ENCODE measurements at regions of chr17 and their contacts with region 1.

Region 1: DNA sequence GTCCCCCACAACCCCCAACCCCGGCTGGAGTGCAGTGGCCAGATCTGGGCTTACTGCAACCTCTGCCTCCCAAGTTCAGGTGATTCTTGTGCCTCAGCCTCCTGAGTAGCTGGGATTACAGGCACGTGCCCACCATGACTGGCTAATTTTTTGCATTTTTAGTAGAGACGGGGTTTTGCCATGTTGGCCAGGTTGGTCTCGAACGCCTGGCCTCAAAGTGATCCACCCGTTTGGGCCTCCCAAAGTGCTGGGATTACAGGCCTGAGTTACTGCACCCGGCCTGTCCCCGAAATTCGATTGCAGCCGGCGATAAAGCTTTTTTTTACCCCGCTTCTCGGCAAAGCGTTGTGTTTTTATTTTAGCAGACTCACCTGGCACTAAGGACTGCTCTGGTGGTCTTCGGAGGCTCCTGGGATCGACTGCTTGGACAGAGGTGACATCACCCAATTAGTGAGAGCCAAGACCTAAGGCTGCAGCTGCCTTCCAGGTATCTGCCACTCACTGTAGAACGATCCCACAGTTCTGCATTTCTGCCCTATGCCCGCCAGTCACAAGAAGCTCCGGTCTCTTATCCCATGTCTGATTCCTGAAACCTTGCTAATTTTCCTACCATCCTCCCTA is 82.2 kb upstream of the ARL4D start:
- DNase-seq: peak; percentile 38
- ATAC-seq: no peak
- H3K4me3 Mint-ChIP-seq: no peak overlapping the region
- H3K27ac Mint-ChIP-seq: no peak overlapping the region
- H3K4me1 Mint-ChIP-seq: peaks cover 11% of the 10 kb centered on the region
- H3K27me3 Mint-ChIP-seq: no peaks in the 10 kb centered on the region

Region 2: GRCh38 chr17:43006639-43007551 is 309.7 kb before region 1 on chr17 and contains the start of gene IFI35:
- CTCF ChIA-PET with region 1: no interaction called
- POLR2A ChIA-PET with region 1: no interaction called
- intact Hi-C with region 1: loop called in 1 of 2 experiments (anchors 1 kb)
- DNase-seq: peak; percentile 94
- ATAC-seq: peak; percentile 97
- H3K4me3 Mint-ChIP-seq: peak within 1 kb of the TSS; percentile 99
- H3K27ac Mint-ChIP-seq: peak within 1 kb of the TSS; percentile 100
- H3K4me1 Mint-ChIP-seq: peaks cover 24% of the 10 kb centered on the region
- H3K27me3 Mint-ChIP-seq: no peaks in the 10 kb centered on the region
- total RNA-seq, gene IFI35: 65.3 to 68.1 TPM

Region 3: DNA sequence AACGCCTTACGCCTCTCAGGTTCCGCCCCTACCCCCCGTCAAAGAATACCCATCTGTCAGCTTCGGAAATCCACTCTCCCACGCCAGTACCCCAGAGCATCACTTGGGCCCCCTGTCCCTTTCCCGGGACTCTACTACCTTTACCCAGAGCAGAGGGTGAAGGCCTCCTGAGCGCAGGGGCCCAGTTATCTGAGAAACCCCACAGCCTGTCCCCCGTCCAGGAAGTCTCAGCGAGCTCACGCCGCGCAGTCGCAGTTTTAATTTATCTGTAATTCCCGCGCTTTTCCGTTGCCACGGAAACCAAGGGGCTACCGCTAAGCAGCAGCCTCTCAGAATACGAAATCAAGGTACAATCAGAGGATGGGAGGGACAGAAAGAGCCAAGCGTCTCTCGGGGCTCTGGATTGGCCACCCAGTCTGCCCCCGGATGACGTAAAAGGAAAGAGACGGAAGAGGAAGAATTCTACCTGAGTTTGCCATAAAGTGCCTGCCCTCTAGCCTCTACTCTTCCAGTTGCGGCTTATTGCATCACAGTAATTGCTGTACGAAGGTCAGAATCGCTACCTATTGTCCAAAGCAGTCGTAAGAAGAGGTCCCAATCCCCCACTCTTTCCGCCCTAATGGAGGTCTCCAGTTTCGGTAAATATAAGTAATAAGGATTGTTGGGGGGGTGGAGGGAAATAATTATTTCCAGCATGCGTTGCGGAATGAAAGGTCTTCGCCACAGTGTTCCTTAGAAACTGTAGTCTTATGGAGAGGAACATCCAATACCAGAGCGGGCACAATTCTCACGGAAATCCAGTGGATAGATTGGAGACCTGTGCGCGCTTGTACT is 191.3 kb before region 1 on chr17 and contains the start of gene BRCA1:
- CTCF ChIA-PET with region 1: interaction called, 3 read pairs
- POLR2A ChIA-PET with region 1: interaction called, 20 read pairs
- intact Hi-C with region 1: loop called (anchors 1 to 10 kb)
- DNase-seq: peak; percentile 97
- ATAC-seq: peak; percentile 99
- H3K4me3 Mint-ChIP-seq: peak within 1 kb of the TSS; percentile 99
- H3K27ac Mint-ChIP-seq: peak within 1 kb of the TSS; percentile 99
- H3K4me1 Mint-ChIP-seq: peaks cover 19% of the 10 kb centered on the region
- H3K27me3 Mint-ChIP-seq: no peaks in the 10 kb centered on the region
- total RNA-seq, gene BRCA1: 99.9 to 115 TPM

Region 4: GRCh38 chr17:43211480-43212402 is 104.9 kb before region 1 on chr17 and contains the start of gene TMEM106A:
- CTCF ChIA-PET with region 1: interaction called, 4 read pairs
- POLR2A ChIA-PET with region 1: interaction called, 30 read pairs
- intact Hi-C with region 1: loop called in 1 of 2 experiments (anchors 1 kb)
- DNase-seq: peak; percentile 88
- ATAC-seq: peak; percentile 92
- H3K4me3 Mint-ChIP-seq: peak within 1 kb of the TSS; percentile 83
- H3K27ac Mint-ChIP-seq: peak within 1 kb of the TSS; percentile 92
- H3K4me1 Mint-ChIP-seq: peaks cover 25% of the 10 kb centered on the region
- H3K27me3 Mint-ChIP-seq: no peaks in the 10 kb centered on the region
- total RNA-seq, gene TMEM106A: 10.7 to 10.8 TPM

Region 5: DNA sequence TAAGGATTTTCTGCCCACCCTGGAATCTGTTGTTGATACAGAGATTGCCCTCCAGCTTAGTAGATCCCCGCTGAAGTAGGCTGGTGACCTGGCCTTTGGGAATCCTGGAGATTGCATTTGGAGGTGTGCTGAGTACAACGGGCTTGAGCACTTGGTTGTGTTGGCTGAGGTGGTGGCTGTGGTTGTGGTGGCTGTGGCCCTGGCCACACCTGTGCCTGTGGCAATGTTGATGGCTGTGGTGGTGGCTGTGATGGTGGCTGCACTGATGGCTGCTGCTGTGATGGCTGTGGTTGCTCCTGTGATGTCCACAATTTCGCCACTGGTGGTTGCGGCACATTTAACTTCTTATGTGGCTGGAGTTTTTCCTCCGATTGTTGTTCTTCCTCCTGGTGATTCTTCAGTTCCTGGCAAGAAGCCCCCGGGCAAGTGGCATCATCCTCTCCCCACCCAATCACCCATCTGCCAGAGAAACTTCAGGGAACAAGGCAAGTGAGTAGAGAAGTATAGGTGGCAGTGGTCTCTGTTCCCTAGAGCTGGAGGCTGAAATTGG is 92.4 kb before region 1 on chr17:
- CTCF ChIA-PET with region 1: interaction called, 3 read pairs
- POLR2A ChIA-PET with region 1: interaction called, 5 read pairs
- intact Hi-C with region 1: loop called in 1 of 2 experiments (anchors 5 kb)
- DNase-seq: no peak
- ATAC-seq: no peak
- H3K4me3 Mint-ChIP-seq: no peak overlapping the region
- H3K27ac Mint-ChIP-seq: no peak overlapping the region
- H3K4me1 Mint-ChIP-seq: peaks cover 3% of the 10 kb centered on the region
- H3K27me3 Mint-ChIP-seq: no peaks in the 10 kb centered on the region

Region 6: DNA sequence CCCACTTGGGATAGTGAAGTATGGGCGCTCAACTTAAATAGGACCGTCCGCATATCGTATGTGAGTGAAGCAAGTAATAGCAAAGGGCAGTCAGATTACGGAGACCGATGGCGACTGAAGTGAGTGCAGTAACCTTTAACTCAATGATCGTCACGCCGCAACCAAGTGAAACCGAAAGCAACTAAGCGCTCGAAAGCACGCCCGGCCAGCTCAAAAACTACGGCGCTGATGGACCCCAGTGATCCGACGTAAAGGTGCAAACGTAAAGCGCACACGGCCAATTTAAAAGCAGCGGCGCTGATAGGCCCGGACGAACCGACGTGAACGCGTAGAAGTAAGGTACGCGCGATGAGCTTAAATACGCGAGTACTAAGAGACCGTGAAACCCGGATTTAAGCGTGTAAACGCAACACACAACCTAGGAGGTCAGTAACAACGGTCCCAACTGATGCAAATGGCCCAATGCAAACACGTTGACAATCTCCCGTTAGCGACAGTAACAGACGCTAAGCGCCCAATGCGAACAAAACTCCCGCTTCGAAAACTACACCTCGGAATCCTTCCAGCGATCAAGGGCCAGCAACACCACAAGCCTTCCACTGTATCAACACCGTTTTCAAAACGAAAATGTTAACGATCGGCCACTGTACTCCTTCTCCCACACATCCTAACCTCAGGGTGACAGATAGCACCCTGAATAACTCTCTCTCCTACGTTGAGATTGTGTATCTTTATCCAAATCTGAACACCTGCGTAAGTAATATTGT is 44.3 kb after region 1 on chr17:
- CTCF ChIA-PET with region 1: no interaction called
- POLR2A ChIA-PET with region 1: interaction called, 27 read pairs
- intact Hi-C with region 1: no loop called
- DNase-seq: peak; percentile 86
- ATAC-seq: peak; percentile 87
- H3K4me3 Mint-ChIP-seq: peak overlapping the region; percentile 90
- H3K27ac Mint-ChIP-seq: peak overlapping the region; percentile 100
- H3K4me1 Mint-ChIP-seq: peaks cover 31% of the 10 kb centered on the region
- H3K27me3 Mint-ChIP-seq: peaks cover 4% of the 10 kb centered on the region

Region 7: GRCh38 chr17:43608313-43608712 is 291.7 kb after region 1 on chr17:
- CTCF ChIA-PET with region 1: no interaction called
- POLR2A ChIA-PET with region 1: no interaction called
- intact Hi-C with region 1: loop called in 1 of 2 experiments (anchors 5 kb)
- DNase-seq: peak; percentile 85
- ATAC-seq: peak; percentile 97
- H3K4me3 Mint-ChIP-seq: no peak overlapping the region
- H3K27ac Mint-ChIP-seq: peak overlapping the region; percentile 73
- H3K4me1 Mint-ChIP-seq: peaks cover 8% of the 10 kb centered on the region
- H3K27me3 Mint-ChIP-seq: no peaks in the 10 kb centered on the region

Region 8: GRCh38 chr17:44110823-44111633 is 794.4 kb after region 1 on chr17:
- CTCF ChIA-PET with region 1: no interaction called
- POLR2A ChIA-PET with region 1: no interaction called
- intact Hi-C with region 1: no loop called
- DNase-seq: peak; percentile 83
- ATAC-seq: peak; percentile 87
- H3K4me3 Mint-ChIP-seq: no peak overlapping the region
- H3K27ac Mint-ChIP-seq: no peak overlapping the region
- H3K4me1 Mint-ChIP-seq: peaks cover 13% of the 10 kb centered on the region
- H3K27me3 Mint-ChIP-seq: no peaks in the 10 kb centered on the region